Mucosa of descending colon (tissue), 3 donors: ENCODE measurements at regions of chr11 and their contacts with region 1.

Region 1: GRCh38 chr11:126194121-126194543 is 17.3 kb downstream of the RPUSD4 start:
- DNase-seq: peak in 1 of 3 donors; percentile 65
- ATAC-seq: peak; percentile 68
- H3K4me3 ChIP-seq: no peak overlapping the region
- H3K4me1 ChIP-seq: no peaks in the 10 kb centered on the region
- CTCF ChIP-seq: peak; percentile 29

Region 2: DNA sequence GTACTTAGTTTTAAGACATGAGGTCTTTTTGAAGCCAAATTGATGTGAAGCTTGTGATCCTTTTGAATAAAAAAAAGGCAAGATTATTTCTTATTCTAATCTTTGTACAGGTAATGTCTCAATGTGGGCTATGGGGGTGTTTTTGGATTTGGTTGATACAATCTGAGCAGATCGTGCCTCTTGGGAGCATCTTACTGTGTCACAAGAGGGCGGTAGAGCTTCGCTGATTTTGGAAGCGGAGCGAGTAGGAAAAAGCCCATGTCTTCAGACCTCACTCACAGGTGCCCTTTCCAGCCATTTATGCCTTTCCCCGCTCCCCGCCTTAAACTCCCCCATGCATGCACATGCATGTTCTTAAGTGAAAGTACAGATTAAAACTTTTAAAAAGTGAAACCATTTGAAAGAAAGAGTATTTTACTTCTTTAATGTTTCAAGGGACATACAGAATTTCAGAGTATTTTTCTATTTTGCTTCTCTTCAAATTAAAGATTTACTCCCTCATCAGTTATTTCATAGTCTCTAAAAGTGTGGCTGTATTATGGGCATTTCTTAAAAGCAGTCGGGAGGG is 271.0 kb before region 1 on chr11:
- intact Hi-C with region 1: loop called (anchors 5 kb)
- DNase-seq: peak in 2 of 3 donors; percentile 57 to 85
- ATAC-seq: peak; percentile 59
- H3K4me3 ChIP-seq: no peak overlapping the region
- H3K4me1 ChIP-seq: peaks cover 7% of the 10 kb centered on the region
- CTCF ChIP-seq: peak; percentile 41